Heart right ventricle (tissue), 16 donors: ENCODE measurements at regions of chr19 and their contacts with region 1.

Region 1: GRCh38 chr19:48965040-48965805 is at the start of gene FTL:
- DNase-seq: peak; percentile 98
- ATAC-seq: peak; percentile 84 to 94 (median 91)
- H3K4me3 ChIP-seq: peak within 1 kb of the TSS; percentile 65 to 100 (median 88)
- H3K27ac ChIP-seq: peak within 1 kb of the TSS; percentile 84 to 96 (median 89)
- H3K4me1 ChIP-seq: peaks cover 15 to 62% (median 55%) of the 10 kb centered on the region in 9 donors
- H3K27me3 ChIP-seq: no peaks in the 10 kb centered on the region
- CTCF ChIP-seq: no peak
- total RNA-seq, gene FTL: 450 to 3,518 (median 637) TPM

Region 2: DNA sequence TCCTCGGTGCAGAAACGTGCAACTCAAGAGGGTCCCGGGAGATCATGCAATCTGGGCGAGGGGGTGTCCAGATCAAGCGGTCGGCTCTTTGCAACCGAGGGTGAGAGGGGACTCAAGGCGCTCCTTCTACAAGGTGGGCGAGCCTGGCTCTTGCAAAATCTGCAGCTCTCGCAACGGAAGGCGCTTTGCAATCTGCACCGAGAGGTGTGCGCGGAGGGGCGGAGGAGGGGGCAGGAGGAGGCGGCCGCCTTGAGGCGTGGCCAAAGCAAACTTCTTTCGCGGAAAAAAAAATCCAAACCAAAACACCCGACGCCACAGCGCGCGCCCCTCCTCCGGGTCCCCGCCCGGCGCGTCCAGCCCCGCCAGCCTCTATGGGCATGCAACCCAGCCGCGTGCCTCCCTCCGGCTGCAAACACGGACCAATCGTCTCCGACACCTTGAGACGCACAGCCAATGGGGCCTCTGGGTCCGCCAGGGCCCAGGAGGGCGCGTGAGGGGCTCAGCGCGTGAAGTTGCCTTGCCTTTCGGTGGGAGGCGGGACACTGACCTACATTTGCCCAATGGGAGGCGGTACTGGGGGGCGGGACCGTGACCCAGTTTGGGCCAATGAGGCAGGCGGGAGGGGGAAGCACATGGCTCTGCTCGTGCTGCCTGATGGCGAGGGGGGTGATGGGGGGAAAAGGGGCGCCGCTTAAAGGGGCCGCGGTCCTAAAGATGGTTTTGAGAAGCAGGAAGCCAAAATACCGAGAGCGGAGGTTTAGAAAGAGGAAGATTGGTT is 327.9 kb before region 1 on chr19 and contains the start of gene DBP:
- intact Hi-C with region 1: loop called in 4 of 10 experiments (anchors 10 kb)
- DNase-seq: peak; percentile 99 to 100
- ATAC-seq: peak; percentile 73 to 87 (median 82)
- H3K4me3 ChIP-seq: peak within 1 kb of the TSS; percentile 15 to 92 (median 75)
- H3K27ac ChIP-seq: peak within 1 kb of the TSS; percentile 90 to 98 (median 96)
- H3K4me1 ChIP-seq: peaks cover 19 to 56% (median 41%) of the 10 kb centered on the region in 9 donors
- H3K27me3 ChIP-seq: no peaks in the 10 kb centered on the region
- CTCF ChIP-seq: no peak
- total RNA-seq, gene DBP: 2.4 to 30.0 (median 12.8) TPM

Region 3: DNA sequence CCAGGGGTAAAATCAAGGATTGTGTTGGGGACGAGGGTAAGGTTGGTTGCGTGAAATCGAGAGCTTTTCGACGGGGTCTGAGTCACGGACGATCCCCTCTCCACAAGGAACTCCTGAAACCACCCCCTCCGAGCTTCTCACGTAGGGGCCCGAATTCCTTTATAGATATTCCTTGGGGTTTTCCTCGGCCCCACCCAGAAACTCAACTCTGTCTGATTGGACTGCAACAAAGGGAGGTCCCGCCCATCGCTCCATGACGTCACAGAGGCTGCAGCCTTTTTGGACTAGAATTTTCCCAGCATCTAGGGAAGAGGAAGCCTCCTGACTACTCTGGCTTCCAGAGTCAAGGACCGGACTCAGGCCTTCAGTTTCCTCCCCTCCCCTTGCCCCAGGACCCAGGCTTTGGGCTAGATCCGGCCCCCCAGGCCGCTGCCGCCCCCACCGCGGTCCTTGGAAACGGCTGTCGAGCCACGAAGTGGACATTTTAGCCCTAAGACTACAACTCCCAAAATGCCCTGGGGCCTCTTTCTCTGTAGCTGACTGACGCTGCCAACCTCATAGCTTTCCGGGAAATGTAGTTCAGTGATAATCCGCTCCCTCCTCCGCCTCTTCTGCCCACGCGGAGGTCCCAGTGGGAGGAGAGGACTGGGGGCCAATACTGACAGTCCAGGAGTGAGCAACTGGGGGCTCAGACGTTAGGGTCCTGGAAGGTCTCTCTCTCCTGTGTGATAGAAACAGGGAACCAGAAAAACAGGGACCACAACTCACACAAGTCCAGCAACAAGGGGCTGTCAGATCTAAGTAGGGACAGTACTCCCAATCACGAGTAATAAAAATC is 218.3 kb before region 1 on chr19 and contains the start of gene IZUMO1:
- intact Hi-C with region 1: no loop called
- DNase-seq: peak; percentile 79 to 94
- ATAC-seq: peak; percentile 76 to 90 (median 84)
- H3K4me3 ChIP-seq: peak within 1 kb of the TSS in 9 of 10 donors; percentile 6 to 55 (median 39)
- H3K27ac ChIP-seq: peak within 1 kb of the TSS; percentile 60 to 91 (median 82)
- H3K4me1 ChIP-seq: peaks cover 0 to 41% (median 21%) of the 10 kb centered on the region in 9 donors
- H3K27me3 ChIP-seq: peaks cover 0 to 32% (median 11%) of the 10 kb centered on the region in 7 donors
- CTCF ChIP-seq: no peak
- total RNA-seq, gene IZUMO1: 0.12 to 0.95 (median 0.68) TPM in 9 of 10 donors, not detected in the other

Region 4: GRCh38 chr19:48872182-48872883 is 92.9 kb before region 1 on chr19 and contains the start of gene PPP1R15A:
- intact Hi-C with region 1: loop called in 7 of 10 experiments (anchors 2 to 10 kb)
- DNase-seq: peak; percentile 98
- ATAC-seq: peak; percentile 59 to 88 (median 78)
- H3K4me3 ChIP-seq: peak within 1 kb of the TSS; percentile 69 to 100 (median 92)
- H3K27ac ChIP-seq: peak within 1 kb of the TSS; percentile 96 to 100 (median 100)
- H3K4me1 ChIP-seq: peaks cover 7 to 62% (median 53%) of the 10 kb centered on the region in 9 donors
- H3K27me3 ChIP-seq: no peaks in the 10 kb centered on the region
- CTCF ChIP-seq: peak in 2 of 9 donors; percentile 10 to 19
- total RNA-seq, gene PPP1R15A: 55.4 to 123 (median 73.7) TPM